ENCODE measurements at regions of chr21 and their contacts with region 1.

Region 1: GRCh38 chr21:27213303-27213702 is 246.4 kb upstream of the ADAMTS5 start:
- DNase-seq: no peak
- ATAC-seq: peak; percentile 75; the same call in 1 of the 2 replicates
- H3K4me3 Mint-ChIP-seq: no peak overlapping the region
- H3K27ac Mint-ChIP-seq: no peak overlapping the region
- H3K4me1 Mint-ChIP-seq: no peaks in the 10 kb centered on the region
- H3K27me3 Mint-ChIP-seq: no peaks in the 10 kb centered on the region; the same call in 1 of the 2 replicates
- CTCF ChIP-seq: no peak

Region 2: GRCh38 chr21:26967062-26967913 is 246.0 kb before region 1 on chr21 and contains the start of gene ADAMTS5:
- CTCF ChIA-PET with region 1: interaction called, 12 read pairs
- POLR2A ChIA-PET with region 1: no interaction called
- DNase-seq: peak; percentile 58
- ATAC-seq: peak; percentile 13
- H3K4me3 Mint-ChIP-seq: peak within 1 kb of the TSS; percentile 87
- H3K27ac Mint-ChIP-seq: no peak within 1 kb of the TSS
- H3K4me1 Mint-ChIP-seq: peaks cover 41% of the 10 kb centered on the region
- H3K27me3 Mint-ChIP-seq: peaks cover 49% of the 10 kb centered on the region
- CTCF ChIP-seq: no peak
- total RNA-seq, gene ADAMTS5: 0.57 to 1.6 TPM (median 0.64 TPM) in 3 replicates

Region 3: DNA sequence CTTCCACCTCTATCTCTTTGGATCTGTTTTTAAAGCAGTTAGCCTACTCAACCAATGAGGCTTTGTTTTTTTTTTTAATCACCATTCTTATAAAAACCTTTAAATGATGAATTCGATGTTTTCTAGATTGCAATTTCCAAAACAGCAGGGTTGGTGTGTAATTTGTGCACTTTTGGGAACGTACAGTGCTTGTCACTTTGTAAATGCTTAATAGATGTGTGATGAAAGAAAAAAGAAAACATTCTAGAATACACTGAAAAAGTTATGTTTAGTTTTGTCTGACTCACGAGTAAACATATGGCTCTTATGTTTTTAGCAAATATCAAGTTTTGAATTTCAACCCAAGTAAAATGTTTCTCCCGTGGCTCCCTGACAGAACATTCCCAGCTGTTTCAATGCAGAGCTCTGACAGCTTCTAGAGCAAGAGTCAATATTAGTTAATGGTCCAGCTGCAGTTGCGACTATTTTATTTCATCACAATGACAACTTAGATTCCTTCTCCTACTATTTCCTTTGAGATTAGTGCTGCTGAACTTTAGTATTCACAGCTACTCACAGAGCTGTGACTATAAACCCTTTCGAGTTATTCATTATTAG is 116.0 kb after region 1 on chr21:
- CTCF ChIA-PET with region 1: no interaction called
- POLR2A ChIA-PET with region 1: no interaction called
- DNase-seq: no peak
- ATAC-seq: no peak
- H3K4me3 Mint-ChIP-seq: no peak overlapping the region
- H3K27ac Mint-ChIP-seq: no peak overlapping the region
- H3K4me1 Mint-ChIP-seq: peaks cover 10% of the 10 kb centered on the region
- H3K27me3 Mint-ChIP-seq: no peaks in the 10 kb centered on the region
- CTCF ChIP-seq: no peak

Measured in WTC11 (cell line).